GM12878 (cell line): ENCODE measurements at regions of chr5 and their contacts with region 1.

Region 1: DNA sequence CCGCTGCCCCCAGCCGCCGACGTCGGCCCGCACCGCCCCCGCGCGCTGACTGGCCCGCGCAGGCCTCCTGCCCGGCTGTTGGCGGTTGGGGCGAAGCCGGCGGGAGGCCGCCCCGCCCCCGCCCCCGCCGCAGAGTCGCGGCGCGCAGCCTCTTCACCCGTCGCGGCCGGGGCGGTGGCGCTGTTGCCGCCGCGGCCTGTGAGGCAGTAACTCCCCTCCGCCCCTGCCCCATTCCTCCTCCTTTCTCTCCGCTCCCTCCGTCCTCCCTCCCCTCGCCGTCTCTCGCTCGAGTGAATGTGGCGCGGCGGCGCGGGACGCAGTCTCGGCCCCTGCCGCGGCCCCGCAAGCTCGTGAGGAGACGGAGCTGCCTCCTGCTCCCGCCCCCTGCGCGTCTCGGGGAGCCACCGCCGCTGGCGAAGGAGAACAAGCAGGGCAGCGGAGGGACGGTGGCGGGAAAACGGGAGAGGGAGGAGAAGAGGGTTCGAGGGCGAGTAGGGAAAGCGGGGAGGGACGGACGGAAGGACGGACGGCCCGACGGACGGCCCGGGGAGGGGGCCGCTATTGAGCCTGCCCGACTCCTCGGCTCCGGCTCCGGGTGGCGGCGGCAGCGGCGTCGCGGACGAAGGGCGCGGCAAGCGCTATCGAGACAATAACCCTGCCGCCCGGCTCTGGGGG is 637 bp upstream of the ERBIN start:
- DNase-seq: no peak
- ATAC-seq: peak; percentile 75
- H3K4me3 ChIP-seq: peak overlapping the region; percentile 85
- H3K27ac ChIP-seq: peak overlapping the region; percentile 96
- H3K4me1 ChIP-seq: 0 out of 2 replicates have a peak, but pooled peaks cover 5% of the 10 kb centered on the region
- H3K27me3 ChIP-seq: no peaks in the 10 kb centered on the region
- CTCF ChIP-seq: peak; percentile 31 to 52 (median 32); a peak in 5 of 6 replicates
- EP300 ChIP-seq: 0 out of 4 replicates have a peak, but pooled peaks of 1 of the 2 experiments have one; percentile 15
- POLR2A ChIP-seq: peak; percentile 87
- RAD21 ChIP-seq: peak; percentile 28; the same call in 1 of the 2 replicates

Region 2: GRCh38 chr5:65721720-65722574 is 203.8 kb before region 1 on chr5 and contains the starts of genes NLN and SGTB:
- CTCF ChIA-PET with region 1: no interaction called
- POLR2A ChIA-PET with region 1: interaction called, 17 read pairs
- RAD21 ChIA-PET with region 1: interaction called, 4 read pairs
- SMC1A ChIA-PET with region 1: interaction called, 4 read pairs
- in situ Hi-C with region 1: no loop called
- intact Hi-C with region 1: loop called (anchors 5 kb)
- DNase-seq: no peak
- ATAC-seq: peak; percentile 93
- H3K4me3 ChIP-seq: peak within 1 kb of the TSS; percentile 91
- H3K27ac ChIP-seq: peak within 1 kb of the TSS; percentile 78
- H3K4me1 ChIP-seq: 0 out of 2 replicates have a peak, but pooled peaks cover 4% of the 10 kb centered on the region
- H3K27me3 ChIP-seq: no peaks in the 10 kb centered on the region
- CTCF ChIP-seq: no peak
- EP300 ChIP-seq: no peak
- POLR2A ChIP-seq: peak; percentile 83
- RAD21 ChIP-seq: no peak
- polyA plus RNA-seq, gene NLN: 6.8 to 9.2 TPM
- polyA plus RNA-seq, gene SGTB: 1.0 to 1.4 TPM

Region 3: DNA sequence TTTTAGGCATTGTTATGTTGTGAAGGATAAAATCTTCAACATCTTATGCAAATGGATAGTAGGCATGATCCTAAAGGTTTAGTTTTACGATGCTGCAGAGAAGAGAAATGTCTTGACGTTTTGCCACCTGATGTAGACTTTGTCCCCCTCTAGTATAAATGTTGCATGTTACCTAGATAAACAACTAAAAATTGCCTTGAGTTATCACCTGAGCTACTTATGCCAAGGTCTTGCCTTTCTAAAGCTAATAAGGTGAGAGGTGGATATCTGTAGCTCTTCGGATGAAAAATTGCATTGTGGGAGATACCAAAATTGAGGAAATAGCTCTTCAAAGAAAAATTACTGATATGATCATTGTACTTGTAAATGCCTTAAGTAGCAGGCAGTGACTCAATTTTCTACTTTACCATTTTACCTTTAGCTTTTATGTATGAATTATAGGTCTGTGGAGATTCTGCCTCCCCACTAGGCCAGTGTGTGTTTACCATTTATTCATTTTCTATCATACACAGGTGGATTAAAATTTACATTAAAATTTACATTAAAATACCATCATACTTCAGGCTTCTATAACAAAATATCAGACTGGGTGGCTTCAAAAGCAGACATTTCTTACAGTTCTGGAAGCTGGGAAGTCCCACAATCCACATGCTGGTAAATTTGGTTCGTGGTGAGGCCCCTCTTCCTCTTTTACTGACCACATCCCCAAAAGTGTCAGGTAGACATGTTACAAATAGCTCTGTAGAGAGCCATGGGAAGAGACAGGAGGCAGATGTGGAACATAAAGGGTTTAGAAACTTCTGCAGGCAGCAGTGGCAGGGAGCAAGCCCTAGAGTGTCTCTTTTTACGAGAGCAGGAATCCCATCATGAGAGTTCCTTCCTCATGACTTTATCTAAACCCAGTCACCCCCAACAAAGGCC is 100.1 kb before region 1 on chr5:
- CTCF ChIA-PET with region 1: interaction called, 4 read pairs
- POLR2A ChIA-PET with region 1: interaction called, 3 read pairs
- RAD21 ChIA-PET with region 1: interaction called, 11 read pairs
- SMC1A ChIA-PET with region 1: interaction called, 5 read pairs
- in situ Hi-C with region 1: no loop called
- intact Hi-C with region 1: loop called (anchors 5 kb)
- DNase-seq: peak; percentile 77
- ATAC-seq: peak; percentile 87
- H3K4me3 ChIP-seq: peak overlapping the region; percentile 29; the same call in 1 of the 2 replicates
- H3K27ac ChIP-seq: peak overlapping the region; percentile 64
- H3K4me1 ChIP-seq: peaks cover 47% of the 10 kb centered on the region
- H3K27me3 ChIP-seq: no peaks in the 10 kb centered on the region
- CTCF ChIP-seq: no peak
- EP300 ChIP-seq: peak; percentile 65 to 80; a peak in 3 of 4 replicates
- POLR2A ChIP-seq: no peak
- RAD21 ChIP-seq: 0 out of 2 replicates have a peak, but pooled peaks have one; percentile 34

Region 4: DNA sequence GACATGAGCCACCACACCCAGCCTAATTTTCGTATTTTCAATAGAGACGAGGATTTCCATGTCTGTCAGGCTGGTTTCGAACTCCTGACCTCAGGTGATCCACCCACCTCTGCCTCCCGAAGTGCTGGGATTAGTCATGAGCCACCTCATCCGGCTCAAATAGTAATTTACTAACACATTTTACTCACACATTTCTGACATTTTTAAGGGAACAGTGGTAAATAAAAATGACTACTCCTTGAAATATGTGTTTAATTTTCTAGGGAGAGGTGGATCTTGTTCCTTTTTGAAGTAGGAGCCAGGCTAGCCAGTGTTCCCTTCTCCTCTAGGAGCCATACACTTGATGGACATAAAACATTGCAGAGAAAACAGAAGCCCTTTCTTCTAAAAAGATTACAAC is 54.6 kb before region 1 on chr5:
- CTCF ChIA-PET with region 1: no interaction called
- POLR2A ChIA-PET with region 1: no interaction called
- RAD21 ChIA-PET with region 1: no interaction called
- SMC1A ChIA-PET with region 1: no interaction called
- in situ Hi-C with region 1: no loop called
- intact Hi-C with region 1: no loop called
- DNase-seq: no peak
- ATAC-seq: no peak
- H3K4me3 ChIP-seq: no peak overlapping the region
- H3K27ac ChIP-seq: no peak overlapping the region
- H3K4me1 ChIP-seq: no peaks in the 10 kb centered on the region
- H3K27me3 ChIP-seq: no peaks in the 10 kb centered on the region
- CTCF ChIP-seq: no peak
- EP300 ChIP-seq: no peak
- POLR2A ChIP-seq: no peak
- RAD21 ChIP-seq: no peak

Region 5: GRCh38 chr5:65970481-65971367 is 45.0 kb after region 1 on chr5:
- CTCF ChIA-PET with region 1: interaction called, 4 read pairs
- POLR2A ChIA-PET with region 1: interaction called, 7 read pairs
- RAD21 ChIA-PET with region 1: interaction called, 6 read pairs
- SMC1A ChIA-PET with region 1: interaction called, 21 read pairs
- in situ Hi-C with region 1: no loop called
- intact Hi-C with region 1: no loop called
- DNase-seq: no peak
- ATAC-seq: peak; percentile 43
- H3K4me3 ChIP-seq: no peak overlapping the region
- H3K27ac ChIP-seq: peak overlapping the region; percentile 45
- H3K4me1 ChIP-seq: peaks cover 10% of the 10 kb centered on the region
- H3K27me3 ChIP-seq: no peaks in the 10 kb centered on the region
- CTCF ChIP-seq: no peak
- EP300 ChIP-seq: no peak
- POLR2A ChIP-seq: no peak
- RAD21 ChIP-seq: no peak

Region 6: GRCh38 chr5:66144074-66144833 is 218.5 kb after region 1 on chr5 and contains the start of gene SREK1:
- CTCF ChIA-PET with region 1: no interaction called
- POLR2A ChIA-PET with region 1: interaction called, 3 read pairs
- RAD21 ChIA-PET with region 1: interaction called, 3 read pairs
- SMC1A ChIA-PET with region 1: interaction called, 3 read pairs
- in situ Hi-C with region 1: no loop called
- intact Hi-C with region 1: loop called (anchors 5 kb)
- DNase-seq: peak; percentile 63
- ATAC-seq: peak; percentile 94
- H3K4me3 ChIP-seq: peak within 1 kb of the TSS; percentile 90
- H3K27ac ChIP-seq: peak within 1 kb of the TSS; percentile 94
- H3K4me1 ChIP-seq: peaks cover 4% of the 10 kb centered on the region; the same call in 1 of the 2 replicates
- H3K27me3 ChIP-seq: no peaks in the 10 kb centered on the region
- CTCF ChIP-seq: no peak
- EP300 ChIP-seq: peak in 1 of 2 experiments; percentile 17; a peak in 1 of 4 replicates
- POLR2A ChIP-seq: peak; percentile 96
- RAD21 ChIP-seq: no peak
- polyA plus RNA-seq, gene SREK1: 30.7 to 31.6 TPM

Region 7: DNA sequence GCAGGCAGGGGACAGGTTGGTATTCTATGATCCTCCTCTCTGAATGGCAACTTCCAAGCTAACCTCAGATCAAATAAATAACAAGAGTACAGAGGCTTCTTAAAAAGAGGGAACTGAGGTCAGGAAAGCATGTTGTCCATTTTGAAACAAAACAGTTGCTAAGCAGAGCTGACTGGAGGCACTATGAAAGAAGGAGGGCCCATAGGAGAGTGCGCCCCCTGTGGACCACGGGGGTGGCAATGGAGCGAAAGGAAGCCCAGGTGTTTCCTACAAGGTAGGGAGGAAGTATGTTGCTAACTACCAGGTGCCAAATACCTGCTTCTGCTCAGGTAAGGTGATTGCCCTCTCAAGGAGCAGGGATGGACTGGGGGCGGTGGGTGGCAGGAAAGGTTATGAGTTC is 568.7 kb after region 1 on chr5:
- CTCF ChIA-PET with region 1: no interaction called
- POLR2A ChIA-PET with region 1: no interaction called
- RAD21 ChIA-PET with region 1: no interaction called
- SMC1A ChIA-PET with region 1: no interaction called
- in situ Hi-C with region 1: no loop called
- intact Hi-C with region 1: no loop called
- DNase-seq: no peak
- ATAC-seq: 0 out of 3 replicates have a peak, but pooled peaks have one; percentile 34
- H3K4me3 ChIP-seq: no peak overlapping the region
- H3K27ac ChIP-seq: no peak overlapping the region
- H3K4me1 ChIP-seq: no peaks in the 10 kb centered on the region
- H3K27me3 ChIP-seq: no peaks in the 10 kb centered on the region
- CTCF ChIP-seq: peak; percentile 20 to 37 (median 28); a peak in 4 of 6 replicates
- EP300 ChIP-seq: no peak
- POLR2A ChIP-seq: no peak
- RAD21 ChIP-seq: 0 out of 2 replicates have a peak, but pooled peaks have one; percentile 25